ENCODE measurements at regions of chr17 and their contacts with region 1.

Region 1: GRCh38 chr17:44919885-44920564 is 4.7 kb upstream of the GFAP start:
- DNase-seq: peak; percentile 89 to 97
- ATAC-seq: peak; percentile 85 to 90
- H3K4me3 ChIP-seq: no peak overlapping the region
- H3K27ac ChIP-seq: peak overlapping the region; percentile 14 to 80; a peak in 4 of 6 replicates
- H3K4me1 ChIP-seq: peaks cover 23% of the 10 kb centered on the region
- CTCF ChIP-seq: peak; percentile 98
- EP300 ChIP-seq: no peak
- POLR2A ChIP-seq: no peak
- RAD21 ChIP-seq: peak; percentile 99

Region 2: GRCh38 chr17:44878627-44879221 is 41.3 kb before region 1 on chr17:
- CTCF ChIA-PET with region 1: interaction called, 18 read pairs
- POLR2A ChIA-PET with region 1: no interaction called
- DNase-seq: peak; percentile 45 to 80
- ATAC-seq: peak; percentile 80 to 85; a peak in 5 of 6 replicates
- H3K4me3 ChIP-seq: no peak overlapping the region
- H3K27ac ChIP-seq: no peak overlapping the region
- H3K4me1 ChIP-seq: no peaks in the 10 kb centered on the region
- CTCF ChIP-seq: peak; percentile 94
- EP300 ChIP-seq: no peak
- POLR2A ChIP-seq: no peak
- RAD21 ChIP-seq: peak; percentile 54

Region 3: GRCh38 chr17:44899069-44899782 is 20.8 kb before region 1 on chr17 and contains the start of gene EFTUD2:
- CTCF ChIA-PET with region 1: interaction called, 217 read pairs
- POLR2A ChIA-PET with region 1: no interaction called
- DNase-seq: peak; percentile 94 to 96
- ATAC-seq: peak; percentile 83 to 85
- H3K4me3 ChIP-seq: peak within 1 kb of the TSS; percentile 65
- H3K27ac ChIP-seq: peak within 1 kb of the TSS; percentile 87 to 96
- H3K4me1 ChIP-seq: peaks cover 37% of the 10 kb centered on the region
- CTCF ChIP-seq: no peak
- EP300 ChIP-seq: peak in 1 of 2 experiments; percentile 25; a peak in 1 of 5 replicates
- POLR2A ChIP-seq: peak; percentile 85
- RAD21 ChIP-seq: peak in 1 of 2 experiments; percentile 18; a peak in 2 of 5 replicates
- polyA plus RNA-seq, gene EFTUD2: 254 and 353 TPM in 2 replicates

Region 4: DNA sequence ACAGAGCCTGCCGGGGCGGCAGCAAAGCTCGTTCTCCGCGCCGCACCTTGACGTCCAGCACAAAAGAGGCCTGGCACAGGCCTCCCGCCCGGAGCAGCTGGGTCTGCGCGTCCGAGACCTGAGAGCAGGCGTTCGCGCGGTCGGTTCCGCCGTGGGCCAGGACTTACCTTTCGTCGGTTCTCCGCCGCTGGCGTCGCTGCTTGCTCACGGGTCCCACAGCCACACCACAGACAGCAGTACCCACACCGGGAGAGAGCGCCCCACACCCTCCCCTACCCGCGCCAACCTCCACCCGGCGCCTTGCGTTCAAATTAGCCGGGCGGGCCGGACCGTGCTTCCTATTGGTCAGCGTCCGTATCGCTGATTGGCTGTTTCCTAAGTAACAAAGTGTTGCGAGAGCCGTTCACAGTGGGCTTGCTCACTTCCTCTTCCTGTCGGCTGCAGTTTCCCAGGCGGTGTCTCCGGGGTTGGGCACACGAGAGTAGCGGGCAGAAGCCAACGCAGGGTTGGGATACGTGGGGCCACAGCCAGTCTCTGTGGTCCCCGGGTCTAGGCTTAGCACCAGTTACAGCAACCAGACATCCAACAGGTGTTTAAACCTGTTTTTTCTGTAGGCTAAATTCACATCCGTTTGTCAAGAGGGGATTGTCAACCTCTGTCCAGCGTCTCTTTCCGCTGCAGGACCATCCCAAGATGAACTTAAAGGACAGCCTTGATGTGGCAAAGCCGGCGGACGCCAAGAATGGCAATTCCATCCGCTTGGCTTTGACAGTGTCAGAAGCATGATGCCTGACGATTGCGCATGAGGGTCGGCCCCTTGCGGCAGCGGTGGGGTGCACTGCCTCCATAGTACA is 27.7 kb after region 1 on chr17 and contains the start of gene KIF18B:
- CTCF ChIA-PET with region 1: interaction called, 752 read pairs
- POLR2A ChIA-PET with region 1: no interaction called
- DNase-seq: peak; percentile 99 to 100
- ATAC-seq: peak; percentile 97 to 98
- H3K4me3 ChIP-seq: peak within 1 kb of the TSS; percentile 75
- H3K27ac ChIP-seq: peak within 1 kb of the TSS; percentile 87 to 94
- H3K4me1 ChIP-seq: peaks cover 17% of the 10 kb centered on the region
- CTCF ChIP-seq: no peak; the same call in 2 of the 3 replicates
- EP300 ChIP-seq: 0 out of 5 replicates have a peak, but pooled peaks of 1 of the 2 experiments have one; percentile 6
- POLR2A ChIP-seq: peak; percentile 96
- RAD21 ChIP-seq: peak; percentile 25 to 43; a peak in 3 of 5 replicates
- polyA plus RNA-seq, gene KIF18B: 19.6 and 20.5 TPM in 2 replicates

Region 5: GRCh38 chr17:44981221-44981968 is 61.4 kb after region 1 on chr17:
- CTCF ChIA-PET with region 1: interaction called, 1,853 read pairs
- POLR2A ChIA-PET with region 1: no interaction called
- DNase-seq: peak; percentile 84 to 88
- ATAC-seq: peak; percentile 77 to 78
- H3K4me3 ChIP-seq: peak overlapping the region; percentile 32
- H3K27ac ChIP-seq: peak overlapping the region; percentile 82 to 87
- H3K4me1 ChIP-seq: peaks cover 40% of the 10 kb centered on the region
- CTCF ChIP-seq: no peak
- EP300 ChIP-seq: peak; percentile 33 to 44; a peak in 1 of 5 replicates
- POLR2A ChIP-seq: no peak
- RAD21 ChIP-seq: no peak; a peak in 1 of 5 replicates

Region 6: DNA sequence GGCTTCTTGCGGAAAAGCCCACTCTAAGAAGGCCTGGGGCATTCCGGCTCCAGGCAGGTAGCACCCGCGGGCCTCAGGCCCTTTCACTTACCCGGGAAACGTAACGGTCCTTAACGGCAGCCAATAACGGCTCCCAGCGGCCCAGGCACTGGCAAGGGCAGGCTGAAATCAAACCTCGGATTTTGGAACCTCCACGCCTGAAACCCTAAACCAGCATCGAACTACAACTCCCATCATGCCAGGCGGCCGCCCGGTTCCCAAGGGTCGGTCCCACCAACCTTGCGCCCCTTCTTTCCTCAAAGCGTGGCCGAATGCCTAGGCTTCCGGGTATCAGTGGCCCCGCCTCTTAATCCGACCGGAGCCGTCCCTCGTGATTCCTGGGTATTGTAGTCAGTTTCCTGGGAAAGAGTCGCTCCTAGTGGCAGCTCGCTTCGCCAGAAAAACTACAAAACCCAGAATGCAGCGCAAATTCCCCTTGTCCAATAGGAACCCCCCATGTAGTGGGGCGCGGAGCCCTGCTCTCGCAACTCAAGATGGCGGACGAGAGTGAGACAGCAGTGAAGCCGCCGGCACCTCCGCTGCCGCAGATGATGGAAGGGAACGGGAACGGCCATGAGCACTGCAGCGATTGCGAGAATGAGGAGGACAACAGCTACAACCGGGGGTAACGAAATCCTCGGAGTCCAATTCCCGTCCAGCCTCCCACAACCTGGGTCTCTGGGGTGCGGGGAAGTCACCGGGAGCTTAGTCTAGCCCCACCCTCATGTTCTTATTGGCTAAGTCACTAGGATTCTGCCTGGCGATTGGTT is 141.0 kb after region 1 on chr17 and contains the start of gene NMT1:
- CTCF ChIA-PET with region 1: interaction called, 13 read pairs
- POLR2A ChIA-PET with region 1: no interaction called
- DNase-seq: peak; percentile 99 to 100
- ATAC-seq: peak; percentile 97
- H3K4me3 ChIP-seq: peak within 1 kb of the TSS; percentile 67
- H3K27ac ChIP-seq: peak within 1 kb of the TSS; percentile 87 to 91
- H3K4me1 ChIP-seq: peaks cover 16% of the 10 kb centered on the region
- CTCF ChIP-seq: no peak
- EP300 ChIP-seq: no peak
- POLR2A ChIP-seq: peak; percentile 91
- RAD21 ChIP-seq: no peak
- polyA plus RNA-seq, gene NMT1: 82.9 and 95.8 TPM in 2 replicates